Activated naive CD4-positive, alpha-beta T cell treated with anti-CD3 and anti-CD28 coated beads for 36 hours (primary cell): ENCODE measurements at regions of chr1 and their contacts with region 1.

Region 1: DNA sequence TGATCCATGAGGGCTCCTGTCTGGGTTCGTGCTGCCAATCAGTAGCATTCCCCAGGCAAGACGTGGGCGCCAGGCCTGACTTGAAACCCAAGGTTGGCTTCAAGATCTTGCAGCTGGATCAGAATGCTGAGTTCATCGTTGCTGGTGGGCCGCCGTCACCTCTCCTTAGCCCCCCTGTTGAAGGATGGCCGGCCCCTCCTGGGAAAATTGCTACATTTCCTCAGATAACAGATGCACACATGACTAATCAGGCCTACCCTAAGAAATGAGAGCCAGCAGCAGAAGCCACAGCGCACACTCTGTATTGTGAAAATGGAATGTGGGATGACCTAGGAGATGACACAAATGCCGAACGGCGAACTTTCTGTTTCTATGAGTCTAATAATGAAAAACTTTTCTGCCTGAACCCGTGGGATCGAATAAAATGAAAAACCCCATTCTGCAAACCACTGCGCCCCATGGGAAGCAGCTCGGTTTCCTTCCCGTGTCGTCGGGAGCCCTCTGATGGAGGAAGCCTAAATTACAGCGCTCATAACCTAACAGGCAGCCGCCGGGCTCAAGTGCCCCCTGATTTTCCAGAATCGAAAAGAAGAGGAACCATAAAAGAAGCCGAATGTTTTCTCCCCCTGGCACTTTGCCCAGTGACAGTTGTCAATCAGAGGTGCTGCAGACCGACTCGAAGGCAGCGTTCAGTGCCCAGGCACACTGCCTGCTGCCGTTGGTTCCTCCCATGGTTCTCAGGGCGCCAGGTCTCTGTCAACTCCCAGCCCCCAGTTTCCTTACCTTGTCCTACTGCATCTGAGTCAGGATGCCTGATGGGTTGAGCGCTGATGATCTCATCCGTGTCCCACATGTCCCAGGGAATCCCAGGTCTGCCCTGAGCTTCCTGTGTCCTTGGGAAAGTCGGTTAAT is 38.2 kb upstream of the H6PD start:
- DNase-seq: peak; percentile 79
- H3K4me3 Mint-ChIP-seq: no peak overlapping the region
- H3K27ac Mint-ChIP-seq: no peak overlapping the region
- H3K4me1 Mint-ChIP-seq: peaks cover 12% of the 10 kb centered on the region
- H3K27me3 Mint-ChIP-seq: peaks cover 39% of the 10 kb centered on the region

Region 2: DNA sequence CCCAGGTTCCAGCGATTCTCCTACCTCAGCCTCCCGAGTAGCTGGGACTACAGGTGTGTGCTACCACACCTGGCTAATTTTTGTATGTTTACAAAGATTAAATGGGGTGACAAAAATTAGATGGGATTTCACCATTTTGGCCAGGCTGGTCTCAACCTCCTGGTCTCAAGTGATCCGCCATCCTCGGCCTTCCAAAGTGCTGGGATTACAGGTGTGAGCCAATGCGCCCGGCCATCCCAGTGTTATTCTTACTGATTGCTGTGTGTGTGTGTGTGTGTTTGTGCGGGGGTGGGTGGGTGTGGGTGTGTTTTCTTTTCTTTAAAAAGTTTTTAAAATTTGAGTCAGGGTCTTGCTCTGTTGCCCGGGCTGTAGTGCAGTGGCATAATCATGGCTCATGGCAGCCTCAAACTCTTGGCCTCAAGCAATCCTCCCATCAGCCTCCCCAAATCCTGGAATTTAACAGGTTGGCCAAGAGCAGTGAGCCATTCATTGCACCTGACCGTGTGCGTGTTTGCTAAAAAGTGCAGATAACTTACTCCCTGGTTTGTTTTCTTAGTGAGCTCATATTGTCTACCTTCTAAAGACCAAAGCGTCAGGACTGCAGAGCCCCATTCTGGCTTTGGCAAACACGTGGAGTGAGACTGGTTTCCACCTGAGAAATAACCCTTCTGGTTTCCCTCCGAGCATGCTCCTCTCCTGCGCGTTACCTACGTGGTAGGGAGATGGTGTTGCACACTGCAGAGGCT is 283.1 kb before region 1 on chr1:
- CTCF ChIA-PET with region 1: no interaction called
- intact Hi-C with region 1: loop called (anchors 1 kb)
- DNase-seq: no peak
- H3K4me3 Mint-ChIP-seq: no peak overlapping the region
- H3K27ac Mint-ChIP-seq: no peak overlapping the region
- H3K4me1 Mint-ChIP-seq: peaks cover 6% of the 10 kb centered on the region
- H3K27me3 Mint-ChIP-seq: no peaks in the 10 kb centered on the region

Region 3: DNA sequence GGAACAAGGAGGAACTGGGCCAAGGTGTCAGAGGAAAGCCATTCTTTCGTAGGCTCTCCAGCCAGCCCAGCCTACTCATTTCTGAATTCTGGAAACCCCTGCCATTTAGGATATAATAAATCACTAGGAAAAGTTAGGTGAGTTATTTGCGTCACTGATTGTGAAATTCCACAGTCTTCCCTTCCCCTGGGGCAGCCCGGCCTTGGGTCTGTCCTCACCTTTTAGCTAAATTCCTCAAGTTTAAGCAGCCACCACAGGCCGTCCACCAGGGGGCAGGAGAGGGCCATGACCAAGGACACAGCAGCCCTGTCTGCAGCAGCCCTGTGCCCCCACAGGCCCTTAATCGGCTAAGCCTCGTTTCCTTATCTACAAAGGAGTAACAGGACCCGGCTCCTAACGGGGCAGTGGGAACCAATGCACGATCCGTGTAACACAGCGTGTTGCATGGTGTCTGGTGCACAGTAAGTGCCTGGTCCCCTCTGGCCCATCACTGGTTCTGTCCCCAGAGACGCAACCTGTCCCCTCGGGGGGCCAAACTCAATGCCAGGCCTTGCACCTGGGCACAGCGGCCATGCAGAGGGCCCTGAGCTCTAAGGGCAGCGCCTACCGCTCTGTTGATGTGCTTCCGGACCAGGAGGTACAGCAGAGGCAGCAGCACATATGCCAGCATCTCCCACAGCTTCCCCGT is 85.6 kb before region 1 on chr1:
- CTCF ChIA-PET with region 1: interaction called, 45 read pairs
- intact Hi-C with region 1: loop called (anchors 1 kb)
- DNase-seq: peak; percentile 92
- H3K4me3 Mint-ChIP-seq: no peak overlapping the region
- H3K27ac Mint-ChIP-seq: no peak overlapping the region
- H3K4me1 Mint-ChIP-seq: no peaks in the 10 kb centered on the region
- H3K27me3 Mint-ChIP-seq: no peaks in the 10 kb centered on the region

Region 4: DNA sequence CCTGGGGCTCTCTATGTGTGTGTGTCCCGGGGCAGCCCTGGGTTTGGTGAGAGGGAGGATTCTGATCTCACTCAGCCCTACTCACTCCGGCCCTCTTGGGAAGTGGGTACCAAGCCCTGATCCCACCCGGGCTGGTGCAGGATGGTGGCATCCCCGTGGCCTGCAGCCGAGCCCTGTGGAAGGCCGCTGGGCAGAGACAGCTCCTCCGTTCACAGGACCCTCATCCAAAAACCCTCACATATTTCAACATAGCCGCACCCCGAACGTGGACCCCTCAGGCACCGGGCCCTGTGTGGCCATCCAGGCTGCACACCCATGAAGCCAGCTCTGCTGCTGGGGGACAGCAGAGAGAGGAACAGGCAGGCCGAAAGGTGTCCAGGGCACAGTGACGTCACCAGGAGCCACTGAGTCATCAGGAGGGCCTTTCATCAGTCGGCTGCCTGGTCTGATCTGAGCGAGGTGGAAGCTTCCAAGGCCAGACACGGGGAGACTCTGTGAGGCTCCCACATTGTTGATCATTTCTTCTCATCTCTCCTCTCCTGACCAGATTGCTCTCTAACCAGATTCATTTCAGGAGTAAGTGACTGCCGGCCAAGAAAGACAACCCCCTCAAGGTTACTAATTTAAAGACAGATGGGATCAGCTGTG is 51.2 kb before region 1 on chr1:
- CTCF ChIA-PET with region 1: interaction called, 15 read pairs
- intact Hi-C with region 1: loop called (anchors 1 kb)
- DNase-seq: no peak
- H3K4me3 Mint-ChIP-seq: no peak overlapping the region
- H3K27ac Mint-ChIP-seq: no peak overlapping the region
- H3K4me1 Mint-ChIP-seq: no peaks in the 10 kb centered on the region
- H3K27me3 Mint-ChIP-seq: no peaks in the 10 kb centered on the region

Region 5: GRCh38 chr1:9181176-9181906 is 15.0 kb before region 1 on chr1:
- CTCF ChIA-PET with region 1: interaction called, 5 read pairs
- intact Hi-C with region 1: loop called (anchors 1 kb)
- DNase-seq: peak; percentile 81
- H3K4me3 Mint-ChIP-seq: peak overlapping the region; percentile 80
- H3K27ac Mint-ChIP-seq: peak overlapping the region; percentile 64
- H3K4me1 Mint-ChIP-seq: peaks cover 6% of the 10 kb centered on the region
- H3K27me3 Mint-ChIP-seq: peaks cover 25% of the 10 kb centered on the region

Region 6: GRCh38 chr1:9321480-9321849 is 125.1 kb after region 1 on chr1:
- CTCF ChIA-PET with region 1: no interaction called
- intact Hi-C with region 1: no loop called
- DNase-seq: no peak
- H3K4me3 Mint-ChIP-seq: no peak overlapping the region
- H3K27ac Mint-ChIP-seq: no peak overlapping the region
- H3K4me1 Mint-ChIP-seq: peaks cover 17% of the 10 kb centered on the region
- H3K27me3 Mint-ChIP-seq: no peaks in the 10 kb centered on the region